ENCODE measurements at regions of chr1 and their contacts with region 1.

Region 1: GRCh38 chr1:183270541-183271141 is 84.6 kb downstream of the LAMC2 start:
- DNase-seq: no peak
- ATAC-seq: peak; percentile 91

Region 2: DNA sequence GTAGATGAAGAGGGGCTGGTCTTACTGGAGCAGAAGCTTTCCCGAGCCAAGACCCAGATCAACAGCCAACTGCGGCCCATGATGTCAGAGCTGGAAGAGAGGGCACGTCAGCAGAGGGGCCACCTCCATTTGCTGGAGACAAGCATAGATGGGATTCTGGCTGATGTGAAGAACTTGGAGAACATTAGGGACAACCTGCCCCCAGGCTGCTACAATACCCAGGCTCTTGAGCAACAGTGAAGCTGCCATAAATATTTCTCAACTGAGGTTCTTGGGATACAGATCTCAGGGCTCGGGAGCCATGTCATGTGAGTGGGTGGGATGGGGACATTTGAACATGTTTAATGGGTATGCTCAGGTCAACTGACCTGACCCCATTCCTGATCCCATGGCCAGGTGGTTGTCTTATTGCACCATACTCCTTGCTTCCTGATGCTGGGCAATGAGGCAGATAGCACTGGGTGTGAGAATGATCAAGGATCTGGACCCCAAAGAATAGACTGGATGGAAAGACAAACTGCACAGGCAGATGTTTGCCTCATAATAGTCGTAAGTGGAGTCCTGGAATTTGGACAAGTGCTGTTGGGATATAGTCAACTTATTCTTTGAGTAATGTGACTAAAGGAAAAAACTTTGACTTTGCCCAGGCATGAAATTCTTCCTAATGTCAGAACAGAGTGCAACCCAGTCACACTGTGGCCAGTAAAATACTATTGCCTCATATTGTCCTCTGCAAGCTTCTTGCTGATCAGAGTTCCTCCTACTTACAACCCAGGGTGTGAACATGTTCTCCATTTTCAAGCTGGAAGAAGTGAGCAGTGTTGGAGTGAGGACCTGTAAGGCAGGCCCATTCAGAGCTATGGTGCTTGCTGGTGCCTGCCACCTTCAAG is 27.2 kb before region 1 on chr1:
- intact Hi-C with region 1: loop called (anchors 2 kb)
- DNase-seq: peak; percentile 82
- ATAC-seq: peak; percentile 64